ENCODE measurements at regions of chr2 and their contacts with region 1.

Region 1: DNA sequence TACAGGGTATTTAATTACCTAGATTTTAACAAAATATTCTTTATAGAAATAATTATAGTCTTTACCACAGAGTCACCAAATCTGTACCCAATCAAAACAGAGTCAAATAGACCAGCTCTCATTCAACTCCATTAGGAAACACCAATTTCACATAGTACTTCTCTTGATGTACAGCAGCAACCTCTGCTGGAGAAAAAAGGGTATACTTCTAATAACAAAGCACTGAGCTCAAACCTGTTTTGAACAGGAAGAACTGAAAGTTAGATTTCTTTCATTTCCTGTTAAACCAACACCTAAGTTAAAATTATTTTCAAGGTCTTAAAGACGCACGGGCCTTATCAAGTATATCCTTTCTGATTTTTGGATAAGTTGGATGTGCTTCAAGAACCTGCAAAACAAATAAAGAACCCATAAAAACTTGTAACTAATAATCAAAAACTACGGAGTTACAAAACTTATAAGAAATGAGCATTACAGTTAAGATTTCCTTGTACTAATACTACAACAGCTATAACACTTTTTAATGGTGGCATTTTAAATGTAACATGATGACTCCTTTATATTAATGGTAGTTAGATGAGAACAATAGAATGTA is 79.0 kb downstream of the TTC21B start:
- DNase-seq: no peak
- H3K4me3 ChIP-seq: no peak overlapping the region
- H3K27ac ChIP-seq: peak overlapping the region in 2 of 59 donors; percentile 10 to 24
- H3K27me3 ChIP-seq: no peaks in the 10 kb centered on the region
- CTCF ChIP-seq: peak; percentile 43 to 87 (median 70)

Region 2: GRCh38 chr2:165239230-165239629 is 635.3 kb before region 1 on chr2 and contains the start of gene SCN2A:
- intact Hi-C with region 1: loop called in 1 of 2 experiments (anchors 10 kb)
- DNase-seq: peak in 2 of 10 donors; percentile 13 to 39
- H3K4me3 ChIP-seq: peak within 1 kb of the TSS in 58 of 59 donors; percentile 15 to 70 (median 54)
- H3K27ac ChIP-seq: peak within 1 kb of the TSS in 58 of 59 donors; percentile 4 to 91 (median 72)
- H3K27me3 ChIP-seq: no peaks in the 10 kb centered on the region
- CTCF ChIP-seq: peak; percentile 63 to 90 (median 77)
- total RNA-seq, gene SCN2A: 55.8 to 282 (median 170) TPM

Region 3: GRCh38 chr2:165401285-165401852 is 473.2 kb before region 1 on chr2:
- intact Hi-C with region 1: loop called in 1 of 2 experiments (anchors 5 kb)
- DNase-seq: peak in 1 of 10 donors; percentile 16
- H3K4me3 ChIP-seq: peak overlapping the region in 5 of 59 donors; percentile 9 to 23 (median 16)
- H3K27ac ChIP-seq: no peak overlapping the region
- H3K27me3 ChIP-seq: no peaks in the 10 kb centered on the region
- CTCF ChIP-seq: peak; percentile 56 to 92 (median 82)

Region 4: GRCh38 chr2:165558832-165559231 is 315.7 kb before region 1 on chr2:
- intact Hi-C with region 1: loop called in 1 of 2 experiments (anchors 10 kb)
- DNase-seq: no peak
- H3K4me3 ChIP-seq: no peak overlapping the region
- H3K27ac ChIP-seq: no peak overlapping the region
- H3K27me3 ChIP-seq: no peaks in the 10 kb centered on the region
- CTCF ChIP-seq: peak in 46 of 56 donors; percentile 9 to 71 (median 43)

Region 5: GRCh38 chr2:165833158-165833557 is 41.4 kb before region 1 on chr2:
- intact Hi-C with region 1: no loop called
- DNase-seq: no peak
- H3K4me3 ChIP-seq: no peak overlapping the region
- H3K27ac ChIP-seq: peak overlapping the region in 1 of 59 donors; percentile 58
- H3K27me3 ChIP-seq: no peaks in the 10 kb centered on the region
- CTCF ChIP-seq: no peak

Region 6: GRCh38 chr2:165902929-165903328 is 28.4 kb after region 1 on chr2:
- intact Hi-C with region 1: no loop called
- DNase-seq: no peak
- H3K4me3 ChIP-seq: peak overlapping the region in 18 of 59 donors; percentile 2 to 41 (median 18)
- H3K27ac ChIP-seq: peak overlapping the region in 20 of 59 donors; percentile 2 to 55 (median 29)
- H3K27me3 ChIP-seq: no peaks in the 10 kb centered on the region
- CTCF ChIP-seq: no peak

Region 7: GRCh38 chr2:166180951-166181812 is 306.6 kb after region 1 on chr2:
- intact Hi-C with region 1: no loop called
- DNase-seq: peak in 9 of 10 donors; percentile 14 to 73 (median 54)
- H3K4me3 ChIP-seq: no peak overlapping the region
- H3K27ac ChIP-seq: no peak overlapping the region
- H3K27me3 ChIP-seq: peaks cover 0 to 8% (median 0%) of the 10 kb centered on the region in 45 donors
- CTCF ChIP-seq: peak in 54 of 56 donors; percentile 28 to 65 (median 53)